SK-N-SH (cell line): ENCODE measurements at regions of chr17 and their contacts with region 1.

Region 1: DNA sequence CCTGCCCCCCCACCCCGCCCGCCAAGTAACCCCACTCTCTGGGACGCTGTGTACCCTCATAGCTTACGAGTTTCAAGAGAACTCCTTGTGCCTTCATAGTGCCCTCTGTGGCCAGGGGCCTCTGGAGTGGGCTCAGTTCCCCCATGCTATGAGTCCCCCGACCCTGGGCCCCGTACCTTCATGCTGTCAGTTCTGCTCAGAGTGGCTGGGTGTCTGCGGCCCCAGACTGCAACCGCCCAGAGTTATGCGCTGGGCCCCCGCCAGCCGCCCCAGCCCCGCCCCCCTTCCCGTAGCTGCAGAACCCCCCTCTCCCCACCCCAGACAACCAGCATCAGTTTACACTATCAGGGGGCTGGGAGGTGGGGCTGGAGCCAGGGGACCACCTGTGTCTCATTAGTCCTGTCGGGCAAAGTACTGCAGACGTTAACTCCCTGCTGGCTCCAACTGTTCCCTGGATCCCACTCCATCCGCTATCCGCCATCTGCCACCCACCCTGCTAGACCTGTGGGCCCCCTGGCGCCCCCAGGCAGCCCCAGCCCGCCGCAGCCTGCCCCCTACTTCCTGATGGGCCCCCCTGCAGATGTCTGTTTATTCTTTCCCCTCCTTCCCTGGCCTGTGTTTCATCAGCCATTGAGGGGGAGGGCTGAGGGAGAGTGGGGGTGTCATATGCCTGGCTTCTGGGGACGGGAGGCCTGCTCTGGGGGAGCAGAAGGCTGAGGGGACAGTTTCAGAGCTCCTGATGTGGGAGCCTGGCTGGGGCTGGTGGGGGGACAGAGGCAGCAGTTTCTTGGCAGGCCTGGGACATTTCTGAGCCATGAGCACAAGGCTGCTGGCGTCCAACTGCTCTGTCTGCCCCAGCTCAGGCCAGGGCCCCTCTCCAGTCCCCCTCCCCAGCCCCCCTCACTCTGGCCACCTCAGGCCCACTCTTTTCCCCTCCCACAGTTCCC is at the start of gene MFAP4:
- DNase-seq: peak; percentile 91
- H3K4me3 ChIP-seq: peak within 1 kb of the TSS; percentile 55 to 69
- H3K27ac ChIP-seq: peak within 1 kb of the TSS; percentile 98 to 99
- H3K4me1 ChIP-seq: peaks cover 58 to 90% of the 10 kb centered on the region in 2 experiments
- H3K27me3 ChIP-seq: no peaks in the 10 kb centered on the region
- CTCF ChIP-seq: no peak
- EP300 ChIP-seq: peak; percentile 71 to 90
- RAD21 ChIP-seq: 0 out of 2 replicates have a peak, but pooled peaks have one; percentile 3
- polyA plus RNA-seq, gene MFAP4: 112 and 120 TPM in 2 replicates

Region 2: GRCh38 chr17:19398301-19399181 is 11.3 kb after region 1 on chr17:
- CTCF ChIA-PET with region 1: interaction called, 5 read pairs
- POLR2A ChIA-PET with region 1: interaction called, 12 read pairs
- DNase-seq: peak; percentile 57
- H3K4me3 ChIP-seq: no peak overlapping the region
- H3K27ac ChIP-seq: peak overlapping the region in 1 of 2 experiments; percentile 62; a peak in 2 of 4 replicates
- H3K4me1 ChIP-seq: peaks cover 13 to 35% of the 10 kb centered on the region in 2 experiments; a peak in 3 of 4 replicates
- H3K27me3 ChIP-seq: no peaks in the 10 kb centered on the region
- CTCF ChIP-seq: no peak
- EP300 ChIP-seq: no peak
- RAD21 ChIP-seq: no peak

Region 3: DNA sequence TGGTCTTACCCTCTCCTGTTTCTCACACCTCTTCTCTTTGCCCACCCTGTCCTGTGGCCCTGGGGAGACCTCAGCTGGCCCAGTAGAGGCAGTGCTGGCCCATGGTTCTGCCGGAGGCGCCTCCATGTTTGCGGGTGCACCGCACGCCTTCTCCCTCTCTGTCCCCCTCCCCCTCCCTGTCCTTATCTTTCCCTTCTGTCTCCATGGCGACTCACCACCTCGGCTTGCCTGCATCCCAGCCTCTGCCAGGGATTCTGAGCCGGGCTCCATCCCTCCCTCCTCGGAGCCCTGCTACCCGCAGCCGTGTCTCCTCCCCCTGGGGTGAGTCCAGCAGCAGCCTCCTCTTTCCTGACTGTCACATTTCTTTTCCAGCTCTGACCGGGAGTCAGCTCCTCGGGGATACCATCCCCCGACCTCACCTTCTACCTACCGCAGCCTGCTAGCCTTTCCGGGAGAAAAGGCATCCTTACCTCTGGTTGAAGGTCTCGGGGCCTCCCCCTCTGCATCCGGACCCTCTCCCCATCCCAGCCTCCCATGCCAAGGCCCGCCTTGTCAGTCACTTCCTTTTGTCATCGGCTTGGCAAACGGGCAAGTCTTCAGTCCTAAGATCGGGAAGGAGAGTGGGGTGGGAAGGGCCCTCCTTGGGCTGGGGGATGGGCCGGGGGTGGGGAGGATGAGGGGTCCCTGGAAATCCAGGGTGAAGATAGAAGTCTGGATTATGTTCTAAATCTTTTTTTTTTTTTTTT is 23.8 kb after region 1 on chr17 and contains the start of gene RNF112:
- CTCF ChIA-PET with region 1: interaction called, 8 read pairs
- POLR2A ChIA-PET with region 1: interaction called, 13 read pairs
- DNase-seq: peak; percentile 92
- H3K4me3 ChIP-seq: peak within 1 kb of the TSS; percentile 50 to 78
- H3K27ac ChIP-seq: peak within 1 kb of the TSS; percentile 53 to 86; a peak in 3 of 4 replicates
- H3K4me1 ChIP-seq: peaks cover 17 to 40% of the 10 kb centered on the region in 2 experiments; a peak in 3 of 4 replicates
- H3K27me3 ChIP-seq: no peaks in the 10 kb centered on the region
- CTCF ChIP-seq: peak; percentile 47
- EP300 ChIP-seq: no peak
- RAD21 ChIP-seq: peak; percentile 70
- polyA plus RNA-seq, gene RNF112: 22.6 and 26.9 TPM in 2 replicates